GM18951 (cell line): ENCODE measurements at regions of chr17 and their contacts with region 1.

Region 1: DNA sequence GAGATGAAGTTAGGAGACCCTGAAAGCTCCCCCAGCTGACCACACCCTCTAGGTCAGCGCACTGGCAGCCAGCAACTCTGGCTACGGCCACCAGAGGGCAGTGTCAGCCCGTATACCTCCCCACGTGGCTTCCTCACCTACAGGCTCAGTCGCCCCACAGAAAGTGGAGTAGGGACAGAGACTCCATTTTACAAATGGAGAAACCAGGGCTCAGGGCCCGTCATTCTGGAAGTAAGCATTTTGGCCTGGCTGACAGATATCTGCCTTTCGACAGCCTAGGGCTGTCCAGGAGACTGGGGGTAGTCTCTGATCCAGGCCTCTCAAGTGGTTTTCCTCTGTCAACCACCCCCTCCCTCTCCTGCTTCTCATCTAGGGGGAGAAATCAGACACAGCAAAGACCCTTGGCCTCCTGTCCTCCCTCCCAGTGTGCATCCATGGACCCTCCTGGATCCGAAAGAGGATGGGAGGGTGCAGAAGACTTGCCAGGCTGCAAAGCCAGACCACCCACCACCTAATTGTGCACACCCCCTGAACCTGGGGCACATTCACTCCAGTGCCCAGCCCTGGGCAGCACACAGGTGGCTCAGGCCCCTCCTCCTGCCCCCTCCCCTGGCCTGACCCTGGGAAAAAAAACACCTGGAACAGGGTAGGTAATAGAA is 3.8 kb upstream of the HAP1 start:
- POLR2A ChIP-seq: no peak

Region 2: DNA sequence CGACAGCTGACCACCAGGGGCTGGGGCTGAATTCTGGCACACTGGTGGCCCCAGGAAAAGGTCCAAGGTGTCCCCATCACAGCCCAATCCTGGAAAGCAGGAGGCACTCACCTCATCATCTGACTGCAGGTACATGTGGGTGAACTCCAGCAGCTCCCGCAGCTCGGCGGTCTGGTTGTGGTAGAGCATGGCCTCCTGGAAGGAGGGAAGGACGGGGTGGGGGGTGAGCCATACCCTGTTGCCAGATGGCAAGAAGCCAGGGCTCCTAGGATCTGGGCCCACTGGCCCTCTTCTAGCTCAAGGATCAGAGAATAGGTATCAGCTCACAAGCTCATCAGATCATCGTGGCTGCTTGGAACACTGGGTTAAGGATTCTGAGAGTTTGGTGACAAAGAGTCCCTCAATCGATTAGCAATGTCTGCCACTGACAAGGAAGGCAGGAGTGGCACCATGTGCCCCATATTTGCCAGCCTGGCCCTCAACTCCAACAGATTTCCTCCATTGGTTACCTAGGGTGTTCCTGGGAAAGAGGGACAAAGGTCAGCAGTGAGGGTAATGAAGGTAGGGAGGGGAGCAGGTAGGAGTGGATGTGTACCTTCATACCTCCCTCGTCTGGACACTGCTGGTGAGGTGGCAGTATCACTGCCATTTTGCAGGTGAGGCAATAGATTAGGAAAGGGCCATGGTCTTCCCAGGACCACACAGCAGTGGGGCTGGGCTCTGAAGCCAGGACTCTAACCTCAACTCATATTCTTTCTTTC is 68.7 kb after region 1 on chr17:
- in situ Hi-C with region 1: loop called (anchors 5 kb)
- POLR2A ChIP-seq: no peak